ENCODE measurements at regions of chr2 and their contacts with region 1.

Region 1: DNA sequence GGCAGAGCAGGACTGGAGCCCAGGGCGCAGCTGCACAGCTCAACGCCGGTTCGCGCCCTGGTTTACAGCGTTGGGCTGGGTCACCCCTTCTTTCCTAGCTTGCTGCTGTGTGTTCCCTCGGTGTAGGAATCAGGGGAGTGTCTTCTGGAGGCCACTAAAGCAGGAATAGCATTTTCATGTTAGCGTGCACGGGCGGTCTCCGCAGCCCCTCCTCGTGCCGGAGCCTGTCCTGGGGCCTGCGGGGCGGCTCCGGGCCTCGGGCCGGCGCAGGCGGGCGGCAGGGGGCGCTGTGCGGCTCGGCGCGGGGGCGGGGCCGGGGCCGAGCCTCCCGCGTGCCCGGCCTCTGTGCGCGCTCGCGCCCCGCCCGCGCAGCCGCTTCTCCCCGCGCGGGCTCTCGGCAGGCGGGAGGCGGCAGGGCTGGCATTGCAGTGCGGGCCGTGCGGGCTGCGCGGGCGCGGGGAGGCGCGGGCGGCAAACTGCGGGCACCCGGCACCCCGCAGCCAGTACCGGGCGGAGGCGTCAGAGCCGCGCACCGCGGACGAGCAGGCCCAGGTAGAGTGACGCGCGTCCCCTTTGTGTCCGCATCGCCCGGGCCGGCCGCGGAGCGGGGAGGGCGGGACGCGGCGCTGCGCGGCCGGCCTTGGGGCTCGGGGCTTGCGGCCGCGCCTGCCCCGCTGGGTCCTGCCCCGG is at the start of gene RNF144A:
- DNase-seq: peak; percentile 40
- H3K4me3 ChIP-seq: peak within 1 kb of the TSS; percentile 28 to 58 (median 51)
- H3K27ac ChIP-seq: no peak within 1 kb of the TSS
- H3K4me1 ChIP-seq: no peaks in the 10 kb centered on the region
- H3K27me3 ChIP-seq: peaks cover 0 to 2% of the 10 kb centered on the region in 2 experiments
- CTCF ChIP-seq: peak; percentile 43 to 51
- POLR2A ChIP-seq: no peak
- total RNA-seq, gene RNF144A: 19.7 and 28.8 TPM in 2 replicates

Region 2: GRCh38 chr2:6896930-6897759 is 20.1 kb before region 1 on chr2:
- CTCF ChIA-PET with region 1: interaction called, 16 read pairs
- POLR2A ChIA-PET with region 1: no interaction called
- dilution Hi-C with region 1: no loop called
- intact Hi-C with region 1: no loop called
- DNase-seq: peak; percentile 62
- H3K4me3 ChIP-seq: no peak overlapping the region
- H3K27ac ChIP-seq: no peak overlapping the region
- H3K4me1 ChIP-seq: no peaks in the 10 kb centered on the region
- H3K27me3 ChIP-seq: peaks cover 3% of the 10 kb centered on the region in 2 experiments
- CTCF ChIP-seq: peak; percentile 31 to 42
- POLR2A ChIP-seq: no peak

Region 3: DNA sequence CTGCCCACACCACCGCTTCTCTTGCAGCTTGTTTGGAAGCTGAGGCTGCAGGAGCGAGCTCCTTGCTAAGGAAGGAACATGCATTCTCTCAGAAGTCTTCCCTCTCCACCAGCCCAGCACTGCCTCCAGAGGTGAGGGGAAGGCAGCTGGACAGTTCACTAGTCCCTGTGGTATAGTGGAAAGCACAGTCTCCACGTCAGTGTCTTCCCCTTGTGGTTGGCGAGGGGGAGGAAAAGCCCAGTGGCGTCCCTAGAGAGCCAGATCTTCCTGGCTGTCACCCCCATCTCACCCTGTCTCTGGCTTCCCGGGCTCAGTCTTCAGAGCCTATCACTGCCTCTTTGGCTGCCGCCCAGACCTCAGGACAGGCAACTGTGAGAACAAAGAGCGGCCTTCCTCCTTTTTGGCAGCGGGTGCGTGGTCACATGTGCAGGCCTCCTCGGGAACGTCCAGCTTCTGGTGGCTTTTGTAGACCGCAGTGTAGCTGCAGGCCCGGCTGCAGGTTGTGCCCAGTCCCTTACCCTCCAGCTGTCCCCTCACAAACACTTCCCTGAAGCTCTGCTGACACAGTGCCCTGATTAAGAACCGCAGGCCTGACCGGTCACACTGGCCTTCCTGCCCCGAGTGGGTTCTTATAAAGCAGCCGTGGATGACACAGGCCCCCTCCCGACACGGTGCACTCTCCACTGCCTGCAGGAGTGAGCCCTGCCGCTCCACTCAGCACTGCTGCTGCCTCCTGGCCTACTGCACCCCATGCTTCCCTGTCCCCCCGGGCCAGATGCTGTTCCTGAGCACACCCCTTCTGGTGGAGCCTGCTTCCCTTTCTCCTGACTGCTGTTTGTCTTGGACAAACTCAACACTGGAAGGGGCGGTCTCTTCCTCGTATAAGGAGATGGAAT is 90.9 kb after region 1 on chr2:
- CTCF ChIA-PET with region 1: interaction called, 26 read pairs
- POLR2A ChIA-PET with region 1: interaction called, 5 read pairs
- dilution Hi-C with region 1: no loop called
- intact Hi-C with region 1: loop called (anchors 2 kb)
- DNase-seq: peak; percentile 47
- H3K4me3 ChIP-seq: no peak overlapping the region
- H3K27ac ChIP-seq: no peak overlapping the region
- H3K4me1 ChIP-seq: peaks cover 4% of the 10 kb centered on the region
- H3K27me3 ChIP-seq: no peaks in the 10 kb centered on the region
- CTCF ChIP-seq: peak; percentile 11 to 22
- POLR2A ChIP-seq: no peak

Region 4: GRCh38 chr2:7029291-7030059 is 112.3 kb after region 1 on chr2:
- CTCF ChIA-PET with region 1: interaction called, 31 read pairs
- POLR2A ChIA-PET with region 1: no interaction called
- dilution Hi-C with region 1: no loop called
- intact Hi-C with region 1: loop called (anchors 5 kb)
- DNase-seq: no peak
- H3K4me3 ChIP-seq: no peak overlapping the region
- H3K27ac ChIP-seq: no peak overlapping the region
- H3K4me1 ChIP-seq: peaks cover 9% of the 10 kb centered on the region
- H3K27me3 ChIP-seq: no peaks in the 10 kb centered on the region
- CTCF ChIP-seq: no peak
- POLR2A ChIP-seq: no peak

Region 5: GRCh38 chr2:7044261-7045250 is 127.3 kb after region 1 on chr2:
- CTCF ChIA-PET with region 1: interaction called, 40 read pairs
- POLR2A ChIA-PET with region 1: no interaction called
- dilution Hi-C with region 1: no loop called
- intact Hi-C with region 1: loop called (anchors 1 kb)
- DNase-seq: peak; percentile 64
- H3K4me3 ChIP-seq: no peak overlapping the region
- H3K27ac ChIP-seq: no peak overlapping the region
- H3K4me1 ChIP-seq: peaks cover 7% of the 10 kb centered on the region
- H3K27me3 ChIP-seq: no peaks in the 10 kb centered on the region
- CTCF ChIP-seq: peak; percentile 91 to 92
- POLR2A ChIP-seq: no peak

Measured in endothelial cell of umbilical vein (primary cell).